HEK293T (cell line): ENCODE measurements at regions of chr7 and their contacts with region 1.

Region 1: GRCh38 chr7:92528188-92528957 is at the starts of genes PEX1 and RBM48:
- DNase-seq: peak; percentile 94

Region 2: DNA sequence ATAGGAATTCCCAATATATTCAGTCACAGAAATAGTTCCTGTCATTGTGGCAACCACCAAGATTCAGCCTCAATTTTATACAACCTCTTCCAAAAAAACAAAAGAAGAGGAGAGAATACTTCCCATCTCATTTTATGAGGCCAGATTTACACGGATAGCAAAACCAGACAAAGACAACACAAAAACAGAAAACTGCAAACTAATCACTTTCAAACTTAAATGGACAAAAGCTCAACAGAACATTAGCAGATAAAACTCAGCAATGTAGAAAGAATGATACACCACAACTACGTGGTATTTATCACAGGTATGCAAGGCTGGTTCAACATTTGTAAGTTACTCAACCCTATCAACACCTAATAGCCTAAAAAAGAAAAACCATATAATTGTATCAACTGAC is 22.0 kb before region 1 on chr7:
- CTCF ChIA-PET with region 1: no interaction called
- POLR2A ChIA-PET with region 1: no interaction called
- DNase-seq: no peak

Region 3: GRCh38 chr7:92590711-92591310 is 62.4 kb after region 1 on chr7:
- CTCF ChIA-PET with region 1: no interaction called
- POLR2A ChIA-PET with region 1: interaction called, 11 read pairs
- DNase-seq: no peak

Region 4: DNA sequence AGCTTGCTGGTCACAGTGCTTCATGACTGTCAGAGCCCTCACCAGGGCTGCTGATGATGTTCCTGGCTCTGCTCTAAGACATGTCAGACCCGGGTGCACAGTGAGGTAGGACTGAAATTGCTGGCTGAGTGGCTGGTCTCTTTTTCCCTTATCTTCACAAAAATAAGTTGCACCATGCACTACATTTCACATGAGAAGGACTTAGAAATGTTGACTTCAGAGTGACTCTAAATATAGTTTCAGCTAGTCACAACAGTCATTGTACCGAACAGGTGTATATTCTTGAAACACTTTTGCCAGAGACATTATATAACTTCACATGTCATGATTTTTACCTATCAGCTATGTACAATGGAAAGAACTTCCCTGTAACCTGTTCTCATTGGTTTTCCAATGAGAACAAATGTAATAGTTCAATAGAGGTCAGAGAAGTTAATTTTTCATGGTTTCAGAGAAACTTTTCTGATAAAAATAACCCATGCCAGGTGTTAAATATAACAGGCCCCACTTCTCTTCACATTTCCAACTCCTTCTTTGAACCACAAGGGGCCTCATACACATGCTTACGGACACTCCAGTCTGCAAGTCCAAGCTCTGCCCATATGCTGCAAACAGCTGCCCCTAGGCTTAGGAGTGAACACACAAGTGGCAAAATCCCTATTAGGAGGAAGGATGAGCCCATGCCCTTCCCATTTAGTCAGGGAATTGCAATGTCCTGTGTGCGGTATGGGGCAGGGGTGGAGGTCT is 192.4 kb after region 1 on chr7:
- CTCF ChIA-PET with region 1: no interaction called
- POLR2A ChIA-PET with region 1: no interaction called
- DNase-seq: no peak